Naive thymus-derived CD4-positive, alpha-beta T cell (primary cell): ENCODE measurements at regions of chr3 and their contacts with region 1.

Region 1: DNA sequence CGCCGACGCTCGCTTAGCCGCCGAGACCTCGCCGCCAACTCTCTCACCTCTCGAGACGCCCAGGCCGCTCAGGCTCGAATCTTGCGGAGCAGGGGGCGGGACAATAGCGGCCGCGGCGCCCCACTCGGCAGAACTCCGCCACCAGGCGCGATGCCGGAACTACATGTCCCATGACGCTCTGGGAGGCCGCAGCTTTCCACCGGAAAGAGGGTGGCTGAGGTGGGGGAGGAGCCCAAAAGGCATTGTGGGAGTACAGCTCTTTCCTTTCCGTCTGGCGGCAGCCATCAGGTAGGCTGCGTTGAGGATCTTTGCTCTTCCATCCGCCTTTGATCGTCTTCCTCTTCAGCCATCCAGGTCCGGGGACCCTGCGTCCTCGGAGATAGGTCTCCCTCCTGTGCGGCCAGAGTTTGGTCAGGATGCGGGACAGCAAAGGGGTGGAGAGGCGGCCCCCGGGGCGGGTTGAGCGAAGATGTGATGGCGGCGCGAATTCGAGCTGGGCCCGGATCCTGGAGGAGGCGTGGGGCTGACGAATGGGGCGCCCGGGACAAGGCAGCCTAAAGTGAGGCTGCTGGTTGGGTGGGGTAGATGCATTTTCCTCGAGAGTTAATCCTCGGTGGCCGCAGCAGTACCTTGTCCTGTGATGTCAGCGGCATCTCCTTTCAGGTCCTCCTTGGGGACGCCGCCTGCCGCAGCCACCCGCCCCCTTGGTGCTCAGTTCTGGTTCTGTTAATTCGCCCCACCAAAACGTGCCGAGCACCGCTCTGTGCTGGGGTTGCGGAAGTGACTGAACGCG is at the starts of genes NKIRAS1 and RPL15:
- DNase-seq: peak; percentile 90 to 98 (median 97)
- ATAC-seq: peak; percentile 97
- H3K4me3 ChIP-seq: peak within 1 kb of the TSS; percentile 88
- H3K4me3 Mint-ChIP-seq: peak within 1 kb of the TSS; percentile 92 to 100 (median 98)
- H3K27ac ChIP-seq: peak within 1 kb of the TSS; percentile 83
- H3K27ac Mint-ChIP-seq: peak within 1 kb of the TSS; percentile 97 to 99 (median 98)
- H3K4me1 ChIP-seq: peaks cover 14 to 18% of the 10 kb centered on the region in 2 donors
- H3K4me1 Mint-ChIP-seq: peaks cover 33 to 52% (median 49%) of the 10 kb centered on the region in 7 donors
- H3K27me3 ChIP-seq: no peaks in the 10 kb centered on the region
- H3K27me3 Mint-ChIP-seq: peaks cover 0 to 4% (median 0%) of the 10 kb centered on the region in 5 donors
- total RNA-seq, gene NKIRAS1: 2.2 to 6.4 (median 3.2) TPM
- total RNA-seq, gene RPL15: 1,489 to 2,250 (median 2,129) TPM

Region 2: GRCh38 chr3:23945903-23946751 is 29.0 kb after region 1 on chr3:
- CTCF ChIA-PET with region 1: interaction called, 3 read pairs
- POLR2A ChIA-PET with region 1: interaction called, 86 read pairs
- intact Hi-C with region 1: loop called (anchors 1 kb)
- DNase-seq: peak; percentile 93 to 98 (median 97)
- ATAC-seq: peak; percentile 89
- H3K4me3 ChIP-seq: peak overlapping the region; percentile 79
- H3K4me3 Mint-ChIP-seq: peak overlapping the region; percentile 70 to 90 (median 87)
- H3K27ac ChIP-seq: peak overlapping the region; percentile 81
- H3K27ac Mint-ChIP-seq: peak overlapping the region; percentile 53 to 95 (median 90)
- H3K4me1 ChIP-seq: peaks cover 28 to 31% of the 10 kb centered on the region in 2 donors
- H3K4me1 Mint-ChIP-seq: peaks cover 30 to 61% (median 48%) of the 10 kb centered on the region in 7 donors
- H3K27me3 ChIP-seq: no peaks in the 10 kb centered on the region
- H3K27me3 Mint-ChIP-seq: peaks cover 0 to 41% (median 0%) of the 10 kb centered on the region in 5 donors